Common myeloid progenitor, CD34-positive (primary cell): ENCODE measurements at regions of chrX and their contacts with region 1.

Region 1: GRCh38 chrX:72029483-72030411 is 102.0 kb downstream of the RTL5 start:
- DNase-seq: no peak
- H3K4me3 ChIP-seq: no peak overlapping the region
- H3K27ac ChIP-seq: no peak overlapping the region
- H3K4me1 ChIP-seq: peaks cover 0 to 12% (median 1%) of the 10 kb centered on the region in 4 experiments
- H3K27me3 ChIP-seq: peaks cover 0 to 15% (median 0%) of the 10 kb centered on the region in 5 experiments

Region 2: DNA sequence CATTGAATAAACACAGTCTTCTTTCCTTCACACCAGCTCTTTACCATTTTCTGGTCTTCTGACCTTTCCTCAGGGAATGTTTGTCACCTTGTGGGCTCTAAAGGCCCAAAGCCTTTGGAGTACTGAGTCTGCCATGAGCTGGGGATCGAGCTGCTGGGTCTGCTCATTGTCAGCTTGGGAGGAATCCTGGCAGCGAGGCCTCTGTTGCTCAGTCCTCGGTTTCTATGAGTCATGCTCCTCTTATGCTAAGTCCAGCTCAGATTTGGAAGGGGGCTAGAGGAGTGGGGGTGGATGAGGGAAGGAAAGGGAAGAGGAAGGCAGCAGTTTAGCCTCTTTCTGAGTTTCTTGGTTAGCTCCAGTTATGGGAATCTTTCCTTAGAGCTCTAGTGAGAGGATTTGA is 88.0 kb before region 1 on chrX:
- CTCF ChIA-PET with region 1: no interaction called
- POLR2A ChIA-PET with region 1: no interaction called
- DNase-seq: no peak
- H3K4me3 ChIP-seq: no peak overlapping the region
- H3K27ac ChIP-seq: no peak overlapping the region
- H3K4me1 ChIP-seq: no peaks in the 10 kb centered on the region
- H3K27me3 ChIP-seq: peaks cover 0 to 32% (median 0%) of the 10 kb centered on the region in 5 experiments

Region 3: GRCh38 chrX:72018277-72019112 is 11.3 kb before region 1 on chrX:
- CTCF ChIA-PET with region 1: interaction called, 21 read pairs
- POLR2A ChIA-PET with region 1: interaction called, 6 read pairs
- DNase-seq: peak; percentile 85 to 94 (median 94)
- H3K4me3 ChIP-seq: peak overlapping the region in 1 of 7 experiments; percentile 10
- H3K27ac ChIP-seq: no peak overlapping the region
- H3K4me1 ChIP-seq: peaks cover 4 to 31% (median 16%) of the 10 kb centered on the region in 4 experiments
- H3K27me3 ChIP-seq: peaks cover 0 to 31% (median 0%) of the 10 kb centered on the region in 5 experiments